Activated CD4-positive, alpha-beta T cell treated with anti-CD3 and anti-CD28 coated beads for 36 hours (primary cell): ENCODE measurements at regions of chr15 and their contacts with region 1.

Region 1: GRCh38 chr15:85667491-85668424 is 127.0 kb downstream of the KLHL25 start:
- DNase-seq: peak; percentile 73
- ATAC-seq: peak; percentile 94
- H3K4me3 Mint-ChIP-seq: peak overlapping the region; percentile 47
- H3K27ac Mint-ChIP-seq: peak overlapping the region; percentile 94
- H3K4me1 Mint-ChIP-seq: peaks cover 35% of the 10 kb centered on the region
- H3K27me3 Mint-ChIP-seq: no peaks in the 10 kb centered on the region

Region 2: GRCh38 chr15:85618956-85619491 is 48.7 kb before region 1 on chr15:
- CTCF ChIA-PET with region 1: no interaction called
- POLR2A ChIA-PET with region 1: interaction called, 6 read pairs
- intact Hi-C with region 1: loop called (anchors 2 to 5 kb)
- DNase-seq: peak; percentile 78
- ATAC-seq: peak; percentile 90
- H3K4me3 Mint-ChIP-seq: no peak overlapping the region
- H3K27ac Mint-ChIP-seq: no peak overlapping the region
- H3K4me1 Mint-ChIP-seq: peaks cover 48% of the 10 kb centered on the region
- H3K27me3 Mint-ChIP-seq: no peaks in the 10 kb centered on the region

Region 3: GRCh38 chr15:85646538-85647091 is 21.1 kb before region 1 on chr15:
- CTCF ChIA-PET with region 1: interaction called, 6 read pairs
- POLR2A ChIA-PET with region 1: interaction called, 8 read pairs
- intact Hi-C with region 1: loop called (anchors 1 to 2 kb)
- DNase-seq: peak; percentile 48
- ATAC-seq: peak; percentile 84
- H3K4me3 Mint-ChIP-seq: no peak overlapping the region
- H3K27ac Mint-ChIP-seq: peak overlapping the region; percentile 90
- H3K4me1 Mint-ChIP-seq: peaks cover 64% of the 10 kb centered on the region
- H3K27me3 Mint-ChIP-seq: no peaks in the 10 kb centered on the region

Region 4: GRCh38 chr15:85702321-85703101 is 34.8 kb after region 1 on chr15:
- CTCF ChIA-PET with region 1: interaction called, 4 read pairs
- POLR2A ChIA-PET with region 1: interaction called, 6 read pairs
- intact Hi-C with region 1: loop called (anchors 1 kb)
- DNase-seq: peak; percentile 46
- ATAC-seq: peak; percentile 53
- H3K4me3 Mint-ChIP-seq: peak overlapping the region; percentile 70
- H3K27ac Mint-ChIP-seq: peak overlapping the region; percentile 94
- H3K4me1 Mint-ChIP-seq: peaks cover 73% of the 10 kb centered on the region
- H3K27me3 Mint-ChIP-seq: no peaks in the 10 kb centered on the region

Region 5: DNA sequence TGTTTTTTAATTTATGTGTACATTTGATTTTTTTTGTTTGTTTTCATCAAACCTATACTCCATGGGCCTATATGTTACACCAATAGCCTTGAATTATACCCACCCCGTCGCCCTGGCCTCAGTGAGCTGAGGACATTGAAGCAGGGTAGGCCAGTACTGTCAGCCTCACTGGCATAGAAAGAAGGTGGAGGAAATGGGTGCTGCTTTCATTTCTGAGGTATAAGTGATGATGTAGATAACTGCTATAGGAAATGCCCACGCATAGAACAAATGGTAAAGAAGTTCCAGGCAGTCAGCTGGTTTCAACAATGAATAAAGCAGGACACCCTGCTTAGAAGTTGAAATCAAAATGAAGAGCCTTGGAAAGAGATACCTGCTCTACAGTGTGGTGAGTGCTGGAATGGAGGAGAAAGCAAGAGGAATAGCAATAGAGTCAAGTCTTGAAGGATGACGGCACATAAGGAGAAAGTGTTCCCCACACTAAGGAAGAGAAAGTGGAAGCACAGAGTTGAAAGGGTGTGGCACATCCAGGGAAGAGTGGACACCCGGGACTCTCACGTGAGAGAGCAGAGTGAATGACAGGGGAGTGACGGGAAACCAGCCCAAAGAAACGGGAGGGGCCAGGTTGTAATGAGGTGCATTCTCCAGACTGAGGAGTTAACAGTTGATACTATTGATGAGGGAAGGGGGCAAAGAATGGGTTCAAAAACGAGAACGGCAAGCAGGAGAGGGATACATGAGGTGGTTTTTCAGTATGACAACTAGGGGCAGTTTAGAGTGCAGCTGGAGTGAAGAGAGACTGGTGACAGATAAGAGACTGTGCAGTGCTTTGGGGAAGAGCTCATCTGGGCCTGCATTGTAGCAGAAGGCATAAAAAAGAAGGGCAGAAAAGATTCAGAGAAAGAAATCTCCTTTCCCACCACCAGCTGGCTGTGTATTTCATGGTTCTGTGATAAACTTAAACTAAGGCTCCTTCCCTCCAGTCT is 56.5 kb after region 1 on chr15:
- CTCF ChIA-PET with region 1: no interaction called
- POLR2A ChIA-PET with region 1: interaction called, 3 read pairs
- intact Hi-C with region 1: loop called in 1 of 2 experiments (anchors 1 kb)
- DNase-seq: peak; percentile 45
- ATAC-seq: peak; percentile 82
- H3K4me3 Mint-ChIP-seq: peak overlapping the region; percentile 50
- H3K27ac Mint-ChIP-seq: peak overlapping the region; percentile 98
- H3K4me1 Mint-ChIP-seq: peaks cover 68% of the 10 kb centered on the region
- H3K27me3 Mint-ChIP-seq: no peaks in the 10 kb centered on the region